ENCODE measurements at regions of chr10 and their contacts with region 1.

Region 1: GRCh38 chr10:99872367-99873162 is 90.1 kb downstream of the ABCC2 start:
- DNase-seq: no peak
- H3K4me3 ChIP-seq: no peak overlapping the region
- H3K27ac ChIP-seq: no peak overlapping the region
- H3K4me1 ChIP-seq: no peaks in the 10 kb centered on the region
- H3K27me3 ChIP-seq: no peaks in the 10 kb centered on the region
- CTCF ChIP-seq: no peak
- EP300 ChIP-seq: no peak
- POLR2A ChIP-seq: no peak
- RAD21 ChIP-seq: no peak

Region 2: DNA sequence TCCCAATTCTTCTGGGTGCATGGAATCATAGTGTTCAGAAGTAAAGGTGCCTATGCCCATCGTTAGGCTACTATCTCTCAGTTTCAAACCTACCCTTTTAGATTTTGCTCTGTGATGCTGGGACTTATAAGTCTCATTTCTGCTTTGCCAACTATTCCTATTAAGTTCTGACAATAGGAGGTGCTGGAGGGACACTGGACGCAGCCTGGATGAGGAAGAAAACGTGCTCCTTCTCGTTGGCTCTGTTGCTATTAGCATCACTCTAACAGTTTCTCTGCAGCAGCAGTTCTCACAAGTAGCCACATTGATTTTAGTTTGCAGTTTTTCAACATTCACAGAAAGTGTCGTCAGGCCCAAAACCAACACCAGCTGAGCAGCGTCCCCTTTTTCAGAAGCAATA is 17.7 kb before region 1 on chr10:
- CTCF ChIA-PET with region 1: interaction called, 16 read pairs
- POLR2A ChIA-PET with region 1: interaction called, 13 read pairs
- DNase-seq: no peak
- H3K4me3 ChIP-seq: no peak overlapping the region
- H3K27ac ChIP-seq: no peak overlapping the region
- H3K4me1 ChIP-seq: peaks cover 4 to 11% (median 9%) of the 10 kb centered on the region in 4 experiments; a peak in 6 of 7 replicates
- H3K27me3 ChIP-seq: no peaks in the 10 kb centered on the region
- CTCF ChIP-seq: peak; percentile 29 to 52 (median 41)
- EP300 ChIP-seq: no peak
- POLR2A ChIP-seq: no peak
- RAD21 ChIP-seq: peak; percentile 56 to 65

Region 3: DNA sequence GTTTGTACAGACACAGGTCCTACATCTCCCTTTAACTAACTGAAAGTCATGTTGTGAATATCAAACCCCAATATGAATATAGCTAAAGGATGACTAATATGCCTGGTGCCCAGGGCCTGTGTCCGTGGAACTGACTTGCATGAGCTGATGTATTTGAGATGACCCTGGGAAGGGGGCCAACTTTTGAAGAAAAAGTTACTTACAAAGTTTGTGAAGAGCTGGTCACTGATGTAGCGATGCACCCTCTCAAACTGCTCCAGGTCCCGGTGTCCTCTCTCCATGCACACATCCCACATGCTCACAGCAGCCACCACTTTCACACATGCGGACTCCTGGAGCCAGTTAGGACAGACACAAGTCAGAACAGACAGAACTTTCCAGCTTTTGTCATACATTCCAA is 16.1 kb after region 1 on chr10:
- CTCF ChIA-PET with region 1: interaction called, 11 read pairs
- POLR2A ChIA-PET with region 1: interaction called, 58 read pairs
- DNase-seq: no peak
- H3K4me3 ChIP-seq: no peak overlapping the region
- H3K27ac ChIP-seq: no peak overlapping the region
- H3K4me1 ChIP-seq: no peaks in the 10 kb centered on the region
- H3K27me3 ChIP-seq: no peaks in the 10 kb centered on the region
- CTCF ChIP-seq: no peak
- EP300 ChIP-seq: no peak
- POLR2A ChIP-seq: no peak
- RAD21 ChIP-seq: no peak

Region 4: GRCh38 chr10:99895867-99896266 is 23.3 kb after region 1 on chr10:
- CTCF ChIA-PET with region 1: interaction called, 4 read pairs
- POLR2A ChIA-PET with region 1: interaction called, 58 read pairs
- DNase-seq: no peak
- H3K4me3 ChIP-seq: no peak overlapping the region
- H3K27ac ChIP-seq: no peak overlapping the region
- H3K4me1 ChIP-seq: no peaks in the 10 kb centered on the region
- H3K27me3 ChIP-seq: no peaks in the 10 kb centered on the region
- CTCF ChIP-seq: no peak
- EP300 ChIP-seq: no peak
- POLR2A ChIP-seq: no peak
- RAD21 ChIP-seq: no peak